ENCODE measurements at regions of chr12 and their contacts with region 1.

Region 1: DNA sequence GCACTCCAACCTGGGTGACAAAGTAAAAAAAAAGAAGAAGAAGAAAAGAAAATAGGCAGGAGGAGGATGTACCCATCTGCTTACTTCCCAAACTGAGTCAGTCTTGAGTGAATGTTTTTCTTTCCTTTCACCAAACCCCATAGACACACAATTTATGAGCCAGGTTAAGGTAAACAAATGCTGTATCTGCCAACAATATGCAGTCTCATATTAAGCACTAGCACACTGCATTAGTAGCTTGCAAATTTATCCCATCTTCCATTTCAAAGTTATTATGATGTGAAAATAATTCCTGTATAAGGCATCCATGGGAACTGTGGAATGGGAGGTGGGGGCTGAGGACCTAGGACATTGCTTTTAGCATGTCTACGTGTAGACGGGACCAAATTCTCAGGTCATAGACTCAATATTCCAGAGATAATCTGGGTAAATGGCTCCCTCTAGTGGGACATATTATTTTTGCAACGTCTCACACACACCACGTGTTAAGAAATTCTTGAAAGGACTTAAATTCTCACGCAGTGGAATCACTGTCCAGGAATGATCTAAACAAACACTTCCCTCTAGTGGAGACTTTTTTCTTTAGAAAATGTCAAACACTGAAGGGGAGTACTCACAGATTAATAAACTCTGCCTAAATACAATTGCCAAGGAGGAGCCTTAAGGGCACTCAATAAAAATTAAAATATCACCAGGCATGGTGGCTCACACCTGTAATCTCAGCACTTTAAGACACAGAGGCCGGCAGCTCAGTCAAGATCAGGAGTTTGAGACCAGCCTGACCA is 17.1 kb upstream of the OR10P1 start:
- DNase-seq: peak in 3 of 6 donors; percentile 35 to 58 (median 35)
- ATAC-seq: peak; percentile 94 to 99 (median 97)
- H3K4me3 ChIP-seq: no peak overlapping the region
- H3K27ac ChIP-seq: no peak overlapping the region
- H3K4me1 ChIP-seq: peaks cover 0 to 6% (median 0%) of the 10 kb centered on the region in 3 donors
- H3K27me3 ChIP-seq: peaks cover 0 to 3% (median 0%) of the 10 kb centered on the region in 4 donors
- CTCF ChIP-seq: peak; percentile 60 to 80 (median 75)

Region 2: GRCh38 chr12:55188974-55189556 is 430.5 kb before region 1 on chr12:
- intact Hi-C with region 1: loop called in 2 of 3 experiments (anchors 5 to 10 kb)
- DNase-seq: peak in 3 of 6 donors; percentile 15 to 48 (median 15)
- ATAC-seq: peak in 3 of 4 donors; percentile 86 to 91 (median 88)
- H3K4me3 ChIP-seq: no peak overlapping the region
- H3K27ac ChIP-seq: no peak overlapping the region
- H3K4me1 ChIP-seq: no peaks in the 10 kb centered on the region
- H3K27me3 ChIP-seq: no peaks in the 10 kb centered on the region
- CTCF ChIP-seq: peak; percentile 20 to 65 (median 52)

Region 3: GRCh38 chr12:55194382-55194781 is 425.2 kb before region 1 on chr12:
- intact Hi-C with region 1: loop called in 2 of 3 experiments (anchors 5 to 10 kb)
- DNase-seq: no peak
- ATAC-seq: no peak
- H3K4me3 ChIP-seq: no peak overlapping the region
- H3K27ac ChIP-seq: no peak overlapping the region
- H3K4me1 ChIP-seq: no peaks in the 10 kb centered on the region
- H3K27me3 ChIP-seq: peaks cover 0 to 5% (median 1%) of the 10 kb centered on the region in 4 donors
- CTCF ChIP-seq: no peak

Region 4: GRCh38 chr12:55446326-55446725 is 173.2 kb before region 1 on chr12:
- intact Hi-C with region 1: loop called in 1 of 3 experiments (anchors 10 kb)
- DNase-seq: no peak
- ATAC-seq: peak in 2 of 4 donors; percentile 43 to 75
- H3K4me3 ChIP-seq: no peak overlapping the region
- H3K27ac ChIP-seq: no peak overlapping the region
- H3K4me1 ChIP-seq: no peaks in the 10 kb centered on the region
- H3K27me3 ChIP-seq: no peaks in the 10 kb centered on the region
- CTCF ChIP-seq: no peak

Measured in pancreas (tissue), 10 donors.